ENCODE measurements at regions of chr6 and their contacts with region 1.

Region 1: GRCh38 chr6:28580475-28580874 is 54.8 kb downstream of the GPX5 start:
- DNase-seq: no peak
- ATAC-seq: peak; percentile 58
- H3K4me3 ChIP-seq: no peak overlapping the region
- H3K27ac ChIP-seq: no peak overlapping the region
- H3K4me1 ChIP-seq: peaks cover 0 to 5% of the 10 kb centered on the region in 2 experiments
- H3K27me3 ChIP-seq: no peaks in the 10 kb centered on the region
- CTCF ChIP-seq: peak in 2 of 3 experiments; percentile 28 to 69; a peak in 3 of 6 replicates
- EP300 ChIP-seq: no peak
- POLR2A ChIP-seq: no peak
- RAD21 ChIP-seq: peak; percentile 67 to 84

Region 2: GRCh38 chr6:27472617-27473400 is 1107.7 kb before region 1 on chr6 and contains the start of gene ZNF184:
- CTCF ChIA-PET with region 1: no interaction called
- POLR2A ChIA-PET with region 1: no interaction called
- in situ Hi-C with region 1: no loop called
- intact Hi-C with region 1: no loop called
- DNase-seq: peak; percentile 97 to 100 (median 98)
- ATAC-seq: peak; percentile 91
- H3K4me3 ChIP-seq: peak within 1 kb of the TSS; percentile 75
- H3K27ac ChIP-seq: peak within 1 kb of the TSS; percentile 91
- H3K4me1 ChIP-seq: peaks cover 8 to 11% of the 10 kb centered on the region in 2 experiments; a peak in 4 of 5 replicates
- H3K27me3 ChIP-seq: no peaks in the 10 kb centered on the region
- CTCF ChIP-seq: peak; percentile 31 to 42 (median 37); a peak in 5 of 6 replicates
- EP300 ChIP-seq: peak; percentile 92
- POLR2A ChIP-seq: peak; percentile 92
- RAD21 ChIP-seq: peak; percentile 10 to 18; a peak in 2 of 4 replicates
- polyA plus RNA-seq, gene ZNF184: 7.6 to 12.8 TPM

Region 3: GRCh38 chr6:28496099-28496779 is 84.2 kb before region 1 on chr6:
- CTCF ChIA-PET with region 1: interaction called, 15 read pairs
- POLR2A ChIA-PET with region 1: no interaction called
- in situ Hi-C with region 1: no loop called
- intact Hi-C with region 1: loop called (anchors 1 kb)
- DNase-seq: no peak
- ATAC-seq: peak; percentile 49; the same call in 2 of the 3 replicates
- H3K4me3 ChIP-seq: no peak overlapping the region
- H3K27ac ChIP-seq: no peak overlapping the region
- H3K4me1 ChIP-seq: peaks cover 0 to 11% of the 10 kb centered on the region in 2 experiments; a peak in 3 of 5 replicates
- H3K27me3 ChIP-seq: no peaks in the 10 kb centered on the region
- CTCF ChIP-seq: peak; percentile 32 to 74 (median 37); a peak in 3 of 6 replicates
- EP300 ChIP-seq: no peak
- POLR2A ChIP-seq: no peak
- RAD21 ChIP-seq: peak; percentile 87 to 88

Region 4: GRCh38 chr6:28657769-28658465 is 77.4 kb after region 1 on chr6:
- CTCF ChIA-PET with region 1: no interaction called
- POLR2A ChIA-PET with region 1: no interaction called
- in situ Hi-C with region 1: no loop called
- intact Hi-C with region 1: no loop called
- DNase-seq: peak; percentile 61 to 81 (median 70)
- ATAC-seq: peak; percentile 92
- H3K4me3 ChIP-seq: peak overlapping the region; percentile 22; the same call in 1 of the 2 replicates
- H3K27ac ChIP-seq: no peak overlapping the region
- H3K4me1 ChIP-seq: peaks cover 0 to 7% of the 10 kb centered on the region in 2 experiments; a peak in 2 of 5 replicates
- H3K27me3 ChIP-seq: no peaks in the 10 kb centered on the region
- CTCF ChIP-seq: 0 out of 6 replicates have a peak, but pooled peaks of 1 of the 3 experiments have one; percentile 4
- EP300 ChIP-seq: peak; percentile 78
- POLR2A ChIP-seq: peak; percentile 69
- RAD21 ChIP-seq: no peak